ENCODE measurements at regions of chr6 and their contacts with region 1.

Region 1: GRCh38 chr6:33768644-33769120 is 20.2 kb downstream of the LEMD2 start:
- DNase-seq: peak; percentile 83 to 93 (median 86)
- H3K4me3 ChIP-seq: no peak overlapping the region
- H3K27ac ChIP-seq: no peak overlapping the region
- H3K4me1 ChIP-seq: peaks cover 0 to 11% (median 8%) of the 10 kb centered on the region in 3 donors
- H3K27me3 ChIP-seq: no peaks in the 10 kb centered on the region
- CTCF ChIP-seq: peak; percentile 75

Region 2: GRCh38 chr6:34154668-34155447 is 386.2 kb after region 1 on chr6:
- intact Hi-C with region 1: loop called (anchors 10 kb)
- DNase-seq: peak; percentile 64 to 83 (median 80)
- H3K4me3 ChIP-seq: peak overlapping the region in 1 of 3 donors; percentile 29
- H3K27ac ChIP-seq: no peak overlapping the region
- H3K4me1 ChIP-seq: peaks cover 0 to 3% (median 0%) of the 10 kb centered on the region in 3 donors
- H3K27me3 ChIP-seq: peaks cover 8% of the 10 kb centered on the region
- CTCF ChIP-seq: peak; percentile 83

Measured in kidney (tissue), 22 donors.